Heart right ventricle (tissue), 16 donors: ENCODE measurements at regions of chr3 and their contacts with region 1.

Region 1: GRCh38 chr3:42118762-42119361 is 27.7 kb downstream of the TRAK1 start:
- DNase-seq: no peak
- ATAC-seq: peak; percentile 24 to 70 (median 53)
- H3K4me3 ChIP-seq: no peak overlapping the region
- H3K27ac ChIP-seq: peak overlapping the region in 6 of 10 donors; percentile 9 to 71 (median 49)
- H3K4me1 ChIP-seq: peaks cover 49 to 99% (median 85%) of the 10 kb centered on the region in 9 donors
- H3K27me3 ChIP-seq: no peaks in the 10 kb centered on the region
- CTCF ChIP-seq: peak in 7 of 9 donors; percentile 34 to 54 (median 47)

Region 2: DNA sequence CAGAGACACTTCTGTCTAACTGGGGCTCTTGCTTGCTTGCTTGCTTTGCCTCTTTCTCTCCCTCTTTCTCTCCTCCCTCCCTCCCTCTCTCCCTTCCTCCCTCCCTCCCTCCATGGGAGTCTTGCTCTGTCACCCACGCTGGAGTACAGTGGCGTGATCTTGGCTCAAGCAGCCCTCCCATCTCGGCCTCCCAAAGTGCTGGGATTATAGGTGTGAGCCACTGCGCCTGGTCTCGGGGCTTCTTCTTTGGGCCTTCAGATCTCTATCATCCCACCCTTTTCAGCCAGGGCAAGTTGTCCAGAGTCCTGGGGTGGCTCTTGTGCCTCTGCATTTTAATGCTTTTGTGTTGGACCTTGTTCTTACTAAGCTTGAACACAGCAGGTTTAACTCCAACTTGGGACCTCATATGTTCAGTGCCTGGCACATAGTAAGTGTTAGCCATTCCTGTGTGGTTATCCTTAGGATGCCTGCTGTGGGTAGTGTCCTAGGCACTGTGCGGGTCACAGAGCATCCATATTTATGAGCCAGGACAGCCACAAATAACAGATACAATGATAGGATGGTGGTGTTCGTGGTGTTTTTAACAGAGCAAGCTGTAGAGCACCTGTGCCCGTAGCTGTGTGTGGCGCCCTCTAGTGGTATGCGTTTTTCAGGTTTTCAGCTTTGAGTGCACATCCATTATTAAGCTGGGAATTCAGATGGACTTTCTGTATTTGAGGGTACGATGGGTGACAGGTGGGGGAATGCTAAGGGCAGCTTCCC is 72.0 kb after region 1 on chr3:
- intact Hi-C with region 1: loop called (anchors 1 to 5 kb)
- DNase-seq: peak in 1 of 2 donors; percentile 72
- ATAC-seq: peak; percentile 34 to 69 (median 57)
- H3K4me3 ChIP-seq: no peak overlapping the region
- H3K27ac ChIP-seq: peak overlapping the region in 2 of 10 donors; percentile 5 to 67
- H3K4me1 ChIP-seq: peaks cover 0 to 71% (median 44%) of the 10 kb centered on the region in 9 donors
- H3K27me3 ChIP-seq: no peaks in the 10 kb centered on the region
- CTCF ChIP-seq: peak; percentile 79 to 90 (median 82)